CD8-positive, alpha-beta memory T cell (primary cell): ENCODE measurements at regions of chr1 and their contacts with region 1.

Region 1: GRCh38 chr1:155172732-155173477 is at the start of gene KRTCAP2:
- DNase-seq: peak; percentile 91 to 97 (median 92)
- H3K4me3 ChIP-seq: peak within 1 kb of the TSS; percentile 97
- H3K4me3 Mint-ChIP-seq: peak within 1 kb of the TSS; percentile 86 to 100 (median 98)
- H3K27ac ChIP-seq: peak within 1 kb of the TSS; percentile 94
- H3K27ac Mint-ChIP-seq: peak within 1 kb of the TSS; percentile 79 to 100 (median 98)
- H3K4me1 ChIP-seq: peaks cover 41% of the 10 kb centered on the region
- H3K4me1 Mint-ChIP-seq: peaks cover 28 to 64% (median 40%) of the 10 kb centered on the region in 3 donors
- H3K27me3 ChIP-seq: no peaks in the 10 kb centered on the region
- H3K27me3 Mint-ChIP-seq: peaks cover 0 to 2% of the 10 kb centered on the region in 2 donors
- total RNA-seq, gene KRTCAP2: 181 to 207 TPM

Region 2: DNA sequence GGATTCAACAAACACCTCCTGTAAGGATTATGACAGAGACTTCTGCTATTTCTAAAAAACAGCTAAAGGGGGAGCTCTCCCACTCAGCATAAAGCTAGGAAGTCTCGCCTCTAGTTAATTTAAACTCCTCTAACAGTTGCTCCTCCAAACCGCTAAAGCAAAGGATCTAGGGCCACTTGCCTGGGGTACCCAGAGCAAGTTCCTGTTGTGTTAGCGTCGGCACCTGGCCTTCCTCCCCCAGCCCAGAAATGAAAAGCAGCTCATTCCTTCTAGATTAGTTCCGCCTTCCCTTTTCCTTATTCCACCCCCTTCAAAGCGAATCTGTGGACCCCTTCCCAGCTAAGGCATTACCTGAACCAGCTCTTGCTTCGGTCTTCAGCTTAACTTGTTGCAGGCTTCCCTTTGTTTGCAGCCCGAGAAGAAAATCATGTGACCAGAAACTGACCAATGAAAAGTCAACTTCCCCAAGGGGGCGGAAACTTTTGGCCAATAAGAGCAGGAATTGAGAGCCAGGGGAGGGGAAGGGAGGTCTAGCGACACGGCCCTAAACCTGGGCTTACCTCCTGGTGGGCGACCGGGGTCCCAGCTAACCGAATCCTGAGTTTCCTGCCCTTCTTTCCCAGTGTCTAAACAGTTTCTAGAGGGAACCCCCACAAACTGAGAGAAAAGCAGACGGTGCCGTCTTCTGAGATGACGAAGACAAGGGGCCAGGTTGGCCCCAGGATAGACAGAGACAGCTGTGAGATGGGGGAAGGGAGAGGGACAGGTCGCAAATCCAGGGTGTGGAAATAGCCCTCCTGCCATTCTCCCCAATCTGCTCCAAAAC is 217.0 kb before region 1 on chr1 and contains the start of gene PBXIP1:
- CTCF ChIA-PET with region 1: interaction called, 10 read pairs
- POLR2A ChIA-PET with region 1: interaction called, 3 read pairs
- DNase-seq: peak; percentile 67 to 94 (median 89)
- H3K4me3 ChIP-seq: peak within 1 kb of the TSS; percentile 85
- H3K4me3 Mint-ChIP-seq: peak within 1 kb of the TSS; percentile 95 to 99 (median 97)
- H3K27ac ChIP-seq: peak within 1 kb of the TSS; percentile 100
- H3K27ac Mint-ChIP-seq: peak within 1 kb of the TSS; percentile 99 to 100 (median 100)
- H3K4me1 ChIP-seq: peaks cover 66% of the 10 kb centered on the region
- H3K4me1 Mint-ChIP-seq: peaks cover 63 to 90% (median 77%) of the 10 kb centered on the region in 3 donors
- H3K27me3 ChIP-seq: no peaks in the 10 kb centered on the region
- H3K27me3 Mint-ChIP-seq: peaks cover 0 to 9% of the 10 kb centered on the region in 2 donors
- total RNA-seq, gene PBXIP1: 35.9 to 36.1 TPM

Region 3: DNA sequence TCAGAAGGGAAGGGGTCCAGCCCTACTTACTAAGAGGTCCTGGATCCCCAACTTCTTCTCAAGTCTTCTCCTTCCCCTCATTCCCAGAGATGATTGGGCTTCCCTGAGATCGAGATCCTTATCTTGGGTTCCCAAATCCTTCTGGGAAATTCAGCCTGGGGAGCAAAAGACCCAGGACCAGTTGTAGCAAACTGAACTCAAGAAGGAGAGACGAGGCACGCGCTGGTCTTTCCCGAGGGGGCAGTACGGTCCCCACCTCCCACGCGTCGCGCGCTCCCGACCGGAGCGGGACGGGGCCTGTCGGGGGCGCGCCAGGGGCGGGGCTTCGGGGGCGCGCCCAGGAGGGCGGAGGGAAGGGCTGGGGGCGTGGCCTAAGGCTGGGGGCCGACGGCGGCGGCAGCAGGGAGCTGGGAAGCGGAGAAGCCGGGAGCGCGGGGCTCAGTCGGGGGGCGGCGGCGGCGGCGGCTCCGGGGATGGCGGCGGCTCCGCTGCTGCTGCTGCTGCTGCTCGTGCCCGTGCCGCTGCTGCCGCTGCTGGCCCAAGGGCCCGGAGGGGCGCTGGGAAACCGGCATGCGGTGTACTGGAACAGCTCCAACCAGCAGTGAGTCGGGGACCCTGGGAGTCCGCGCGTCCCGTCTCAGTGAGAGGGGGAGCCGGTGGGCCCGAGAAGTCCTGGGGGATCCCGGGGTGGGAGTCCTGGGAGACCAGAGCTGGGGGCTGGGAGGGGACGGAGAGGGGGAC is 94.3 kb before region 1 on chr1 and contains the start of gene EFNA3:
- CTCF ChIA-PET with region 1: interaction called, 11 read pairs
- POLR2A ChIA-PET with region 1: no interaction called
- DNase-seq: peak; percentile 37 to 73 (median 49)
- H3K4me3 ChIP-seq: peak within 1 kb of the TSS; percentile 60
- H3K4me3 Mint-ChIP-seq: peak within 1 kb of the TSS; percentile 75 to 85 (median 82)
- H3K27ac ChIP-seq: peak within 1 kb of the TSS; percentile 9
- H3K27ac Mint-ChIP-seq: peak within 1 kb of the TSS; percentile 2 to 77 (median 34)
- H3K4me1 ChIP-seq: peaks cover 56% of the 10 kb centered on the region
- H3K4me1 Mint-ChIP-seq: peaks cover 28 to 53% (median 33%) of the 10 kb centered on the region in 3 donors
- H3K27me3 ChIP-seq: peaks cover 35% of the 10 kb centered on the region
- H3K27me3 Mint-ChIP-seq: peaks cover 29 to 33% of the 10 kb centered on the region in 2 donors
- total RNA-seq, gene EFNA3: 0.94 to 1.4 TPM

Region 4: DNA sequence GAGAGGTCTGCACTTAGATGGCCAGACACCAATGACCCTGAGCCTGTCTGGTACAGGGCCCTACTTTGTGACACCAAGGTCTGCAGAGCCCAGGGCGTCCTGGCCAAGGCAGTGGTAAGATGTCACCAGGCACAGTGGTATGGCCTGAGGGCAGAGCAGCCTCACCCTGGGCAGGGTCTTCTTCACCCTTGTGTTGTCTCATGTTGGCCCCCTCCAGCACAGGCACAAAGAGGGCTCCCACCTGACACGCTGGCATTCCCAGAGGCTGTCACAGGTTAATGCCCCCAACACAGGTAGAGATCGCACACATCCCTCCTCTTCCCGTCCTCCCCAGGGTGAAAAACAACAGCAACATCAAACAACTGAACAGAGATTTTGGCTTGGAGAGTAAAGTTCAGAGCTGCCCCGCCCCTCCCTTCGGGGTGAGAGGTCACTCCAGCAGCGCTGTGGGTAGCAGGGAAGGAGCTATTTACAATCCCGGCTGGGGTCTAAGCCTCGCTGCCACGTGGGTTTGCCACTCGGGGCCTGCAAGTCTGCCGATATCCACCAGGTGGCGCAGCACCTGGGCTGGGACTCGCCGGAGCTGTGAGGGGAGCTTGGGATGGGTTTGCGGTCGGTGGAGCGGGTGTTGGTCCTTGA is 81.7 kb before region 1 on chr1:
- CTCF ChIA-PET with region 1: interaction called, 177 read pairs
- POLR2A ChIA-PET with region 1: interaction called, 3 read pairs
- DNase-seq: peak; percentile 69 to 84 (median 73)
- H3K4me3 ChIP-seq: no peak overlapping the region
- H3K4me3 Mint-ChIP-seq: no peak overlapping the region
- H3K27ac ChIP-seq: no peak overlapping the region
- H3K27ac Mint-ChIP-seq: peak overlapping the region in 1 of 8 donors; percentile 30
- H3K4me1 ChIP-seq: peaks cover 10% of the 10 kb centered on the region
- H3K4me1 Mint-ChIP-seq: peaks cover 4 to 8% (median 4%) of the 10 kb centered on the region in 3 donors
- H3K27me3 ChIP-seq: no peaks in the 10 kb centered on the region
- H3K27me3 Mint-ChIP-seq: peaks cover 1 to 5% of the 10 kb centered on the region in 2 donors

Region 5: GRCh38 chr1:155145491-155145890 is 27.4 kb before region 1 on chr1:
- CTCF ChIA-PET with region 1: interaction called, 16 read pairs
- POLR2A ChIA-PET with region 1: no interaction called
- DNase-seq: no peak
- H3K4me3 ChIP-seq: no peak overlapping the region
- H3K4me3 Mint-ChIP-seq: no peak overlapping the region
- H3K27ac ChIP-seq: no peak overlapping the region
- H3K27ac Mint-ChIP-seq: no peak overlapping the region
- H3K4me1 ChIP-seq: peaks cover 2% of the 10 kb centered on the region
- H3K4me1 Mint-ChIP-seq: peaks cover 2% of the 10 kb centered on the region in 3 donors
- H3K27me3 ChIP-seq: no peaks in the 10 kb centered on the region
- H3K27me3 Mint-ChIP-seq: peaks cover 33 to 43% of the 10 kb centered on the region in 2 donors

Region 6: GRCh38 chr1:155208541-155209311 is 35.8 kb after region 1 on chr1 and contains the start of gene MTX1:
- CTCF ChIA-PET with region 1: interaction called, 11 read pairs
- POLR2A ChIA-PET with region 1: interaction called, 3 read pairs
- DNase-seq: peak; percentile 87 to 96 (median 92)
- H3K4me3 ChIP-seq: peak within 1 kb of the TSS; percentile 100
- H3K4me3 Mint-ChIP-seq: peak within 1 kb of the TSS; percentile 82 to 93 (median 89)
- H3K27ac ChIP-seq: peak within 1 kb of the TSS; percentile 99
- H3K27ac Mint-ChIP-seq: peak within 1 kb of the TSS; percentile 92 to 99 (median 96)
- H3K4me1 ChIP-seq: peaks cover 23% of the 10 kb centered on the region
- H3K4me1 Mint-ChIP-seq: peaks cover 18 to 28% (median 26%) of the 10 kb centered on the region in 3 donors
- H3K27me3 ChIP-seq: no peaks in the 10 kb centered on the region
- H3K27me3 Mint-ChIP-seq: peaks cover 0 to 3% of the 10 kb centered on the region in 2 donors
- total RNA-seq, gene MTX1: 67.6 to 73.2 TPM

Region 7: GRCh38 chr1:155250633-155251449 is 77.9 kb after region 1 on chr1:
- CTCF ChIA-PET with region 1: interaction called, 10 read pairs
- POLR2A ChIA-PET with region 1: no interaction called
- DNase-seq: peak; percentile 88 to 97 (median 95)
- H3K4me3 ChIP-seq: peak overlapping the region; percentile 54
- H3K4me3 Mint-ChIP-seq: peak overlapping the region; percentile 17 to 84 (median 59)
- H3K27ac ChIP-seq: no peak overlapping the region
- H3K27ac Mint-ChIP-seq: peak overlapping the region in 4 of 8 donors; percentile 13 to 83 (median 40)
- H3K4me1 ChIP-seq: peaks cover 5% of the 10 kb centered on the region
- H3K4me1 Mint-ChIP-seq: peaks cover 20 to 32% (median 24%) of the 10 kb centered on the region in 3 donors
- H3K27me3 ChIP-seq: no peaks in the 10 kb centered on the region
- H3K27me3 Mint-ChIP-seq: no peaks in the 10 kb centered on the region

Region 8: DNA sequence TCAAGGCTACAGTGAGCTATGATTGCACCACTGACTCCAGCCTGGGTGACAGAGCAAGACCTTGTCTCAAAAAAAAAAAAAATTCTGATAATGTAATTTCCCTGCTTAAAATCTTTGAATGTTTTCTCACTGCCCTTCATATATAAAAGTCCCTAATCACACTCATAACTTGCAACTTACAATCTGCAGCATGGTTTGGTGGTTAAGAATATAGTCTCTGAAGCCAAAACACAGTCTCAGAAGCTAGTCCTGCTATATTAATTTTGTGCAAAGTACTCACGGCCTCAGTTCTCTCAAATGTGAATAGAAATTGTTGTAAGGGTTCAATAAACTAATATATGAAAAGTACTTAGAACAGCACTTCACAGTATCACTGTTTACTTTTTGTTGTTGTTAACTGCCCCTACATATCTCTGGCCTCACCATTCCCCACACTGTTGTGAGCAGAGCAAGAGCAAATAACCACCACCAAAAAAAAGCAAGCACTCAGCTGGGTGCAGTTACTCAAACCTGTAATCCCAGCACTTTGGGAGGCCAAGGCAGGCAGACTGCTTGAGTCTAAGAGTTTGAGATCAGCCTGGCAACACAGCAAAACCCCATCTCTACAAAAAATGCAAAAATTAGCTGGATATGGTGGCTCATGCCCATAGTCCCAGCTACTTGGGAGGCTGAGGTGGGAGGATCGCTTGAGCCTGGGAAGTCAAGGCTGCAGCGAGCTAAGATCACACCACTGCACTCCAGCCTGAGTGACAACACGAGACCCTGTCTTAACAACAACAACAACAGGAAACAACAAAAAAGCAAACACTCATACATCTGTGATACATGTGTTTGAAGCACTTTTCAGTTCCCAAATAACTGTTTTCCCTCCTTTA is 367.3 kb after region 1 on chr1:
- CTCF ChIA-PET with region 1: no interaction called
- POLR2A ChIA-PET with region 1: no interaction called
- DNase-seq: no peak
- H3K4me3 ChIP-seq: no peak overlapping the region
- H3K4me3 Mint-ChIP-seq: peak overlapping the region in 6 of 7 donors; percentile 32 to 54 (median 42)
- H3K27ac ChIP-seq: no peak overlapping the region
- H3K27ac Mint-ChIP-seq: peak overlapping the region; percentile 44 to 96 (median 81)
- H3K4me1 ChIP-seq: peaks cover 47% of the 10 kb centered on the region
- H3K4me1 Mint-ChIP-seq: peaks cover 48 to 72% (median 64%) of the 10 kb centered on the region in 3 donors
- H3K27me3 ChIP-seq: no peaks in the 10 kb centered on the region
- H3K27me3 Mint-ChIP-seq: no peaks in the 10 kb centered on the region